PC-3 (cell line): ENCODE measurements at regions of chr7 and their contacts with region 1.

Region 1: GRCh38 chr7:156816943-156817572 is 75.9 kb downstream of the LMBR1 start:
- DNase-seq: peak; percentile 57
- ATAC-seq: peak; percentile 64
- H3K4me3 ChIP-seq: no peak overlapping the region
- H3K27ac ChIP-seq: no peak overlapping the region
- H3K4me1 ChIP-seq: no peaks in the 10 kb centered on the region
- H3K27me3 ChIP-seq: no peaks in the 10 kb centered on the region
- CTCF ChIP-seq: peak; percentile 68

Region 2: GRCh38 chr7:155796381-155797261 is 1020.4 kb before region 1 on chr7:
- CTCF ChIA-PET with region 1: interaction called, 4 read pairs
- POLR2A ChIA-PET with region 1: no interaction called
- intact Hi-C with region 1: loop called (anchors 2 kb)
- DNase-seq: peak; percentile 43
- ATAC-seq: peak; percentile 94
- H3K4me3 ChIP-seq: no peak overlapping the region
- H3K27ac ChIP-seq: no peak overlapping the region
- H3K4me1 ChIP-seq: no peaks in the 10 kb centered on the region; the same call in 1 of the 2 replicates
- H3K27me3 ChIP-seq: no peaks in the 10 kb centered on the region
- CTCF ChIP-seq: peak; percentile 51; the same call in 1 of the 2 replicates

Region 3: GRCh38 chr7:156473476-156474240 is 343.4 kb before region 1 on chr7:
- CTCF ChIA-PET with region 1: no interaction called
- POLR2A ChIA-PET with region 1: no interaction called
- intact Hi-C with region 1: loop called (anchors 10 kb)
- DNase-seq: peak; percentile 52
- ATAC-seq: peak; percentile 65
- H3K4me3 ChIP-seq: no peak overlapping the region
- H3K27ac ChIP-seq: no peak overlapping the region
- H3K4me1 ChIP-seq: peaks cover 12% of the 10 kb centered on the region
- H3K27me3 ChIP-seq: no peaks in the 10 kb centered on the region
- CTCF ChIP-seq: peak; percentile 88

Region 4: GRCh38 chr7:156650042-156650441 is 167.0 kb before region 1 on chr7:
- CTCF ChIA-PET with region 1: no interaction called
- POLR2A ChIA-PET with region 1: no interaction called
- intact Hi-C with region 1: loop called (anchors 5 kb)
- DNase-seq: peak; percentile 37
- ATAC-seq: peak; percentile 76
- H3K4me3 ChIP-seq: no peak overlapping the region
- H3K27ac ChIP-seq: no peak overlapping the region
- H3K4me1 ChIP-seq: peaks cover 5% of the 10 kb centered on the region; the same call in 1 of the 2 replicates
- H3K27me3 ChIP-seq: no peaks in the 10 kb centered on the region
- CTCF ChIP-seq: peak; percentile 55

Region 5: DNA sequence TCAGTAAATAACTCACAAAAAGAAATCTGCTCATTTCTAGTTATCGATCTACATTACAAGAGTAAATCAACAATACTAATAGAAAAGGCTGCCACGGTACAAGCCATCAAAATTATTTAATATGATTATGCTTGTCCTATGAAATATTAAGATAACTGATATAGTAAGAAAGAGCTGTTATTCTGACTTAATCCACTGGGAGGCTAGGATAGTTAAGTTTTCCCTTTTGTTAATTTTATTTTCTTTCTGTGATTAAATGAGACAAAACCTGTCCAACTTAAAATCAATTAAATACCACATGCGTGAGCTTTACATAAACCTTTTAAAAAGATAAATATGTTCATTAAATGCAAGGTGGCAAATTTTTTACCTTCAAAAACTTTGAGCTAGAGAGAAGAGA is 38.9 kb before region 1 on chr7:
- CTCF ChIA-PET with region 1: no interaction called
- POLR2A ChIA-PET with region 1: no interaction called
- intact Hi-C with region 1: loop called (anchors 1 kb)
- DNase-seq: peak; percentile 3
- ATAC-seq: no peak
- H3K4me3 ChIP-seq: no peak overlapping the region
- H3K27ac ChIP-seq: no peak overlapping the region
- H3K4me1 ChIP-seq: 0 out of 2 replicates have a peak, but pooled peaks cover 5% of the 10 kb centered on the region
- H3K27me3 ChIP-seq: no peaks in the 10 kb centered on the region
- CTCF ChIP-seq: peak; percentile 22; the same call in 1 of the 2 replicates